Activated naive CD4-positive, alpha-beta T cell treated with anti-CD3 and anti-CD28 coated beads for 36 hours (primary cell): ENCODE measurements at regions of chr9 and their contacts with region 1.

Region 1: DNA sequence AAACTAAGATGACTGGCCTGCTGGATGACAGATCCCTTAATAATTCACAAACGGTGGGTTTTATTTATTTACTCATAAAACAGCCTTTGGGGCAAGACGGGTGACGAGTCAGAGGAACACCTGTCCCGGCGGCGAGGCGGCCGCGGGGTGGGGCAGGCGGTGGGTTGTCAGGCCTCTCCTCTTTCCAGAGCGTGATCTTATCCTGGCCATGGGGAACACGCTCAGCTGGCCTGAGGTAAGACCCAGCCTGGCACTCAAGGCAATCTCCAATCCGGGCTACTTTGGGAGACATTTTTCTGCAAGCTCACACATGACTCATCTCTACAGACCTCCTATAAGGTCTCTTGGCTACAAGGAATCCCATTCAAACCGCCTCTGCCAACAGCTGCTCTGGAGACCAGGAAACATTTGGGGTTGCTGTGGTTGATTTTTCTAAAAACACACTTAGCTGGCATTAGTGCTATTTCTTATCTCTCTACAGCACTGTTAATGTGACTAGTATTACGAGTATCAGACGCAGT is 6.3 kb downstream of the RAPGEF1 start:
- DNase-seq: peak; percentile 58
- H3K4me3 Mint-ChIP-seq: peak overlapping the region; percentile 69
- H3K27ac Mint-ChIP-seq: peak overlapping the region; percentile 93
- H3K4me1 Mint-ChIP-seq: peaks cover 90% of the 10 kb centered on the region
- H3K27me3 Mint-ChIP-seq: no peaks in the 10 kb centered on the region

Region 2: GRCh38 chr9:131270171-131271015 is 463.2 kb before region 1 on chr9:
- CTCF ChIA-PET with region 1: no interaction called
- intact Hi-C with region 1: loop called (anchors 5 kb)
- DNase-seq: peak; percentile 81
- H3K4me3 Mint-ChIP-seq: peak overlapping the region; percentile 96
- H3K27ac Mint-ChIP-seq: peak overlapping the region; percentile 99
- H3K4me1 Mint-ChIP-seq: peaks cover 56% of the 10 kb centered on the region
- H3K27me3 Mint-ChIP-seq: no peaks in the 10 kb centered on the region

Region 3: GRCh38 chr9:131393622-131394463 is 339.8 kb before region 1 on chr9 and contains the start of gene PRRC2B:
- CTCF ChIA-PET with region 1: no interaction called
- intact Hi-C with region 1: loop called (anchors 2 kb)
- DNase-seq: peak; percentile 87
- H3K4me3 Mint-ChIP-seq: peak within 1 kb of the TSS; percentile 89
- H3K27ac Mint-ChIP-seq: peak within 1 kb of the TSS; percentile 93
- H3K4me1 Mint-ChIP-seq: peaks cover 43% of the 10 kb centered on the region
- H3K27me3 Mint-ChIP-seq: no peaks in the 10 kb centered on the region
- total RNA-seq, gene PRRC2B: 157 to 171 TPM

Region 4: GRCh38 chr9:131627648-131628458 is 105.7 kb before region 1 on chr9:
- CTCF ChIA-PET with region 1: no interaction called
- intact Hi-C with region 1: no loop called
- DNase-seq: peak; percentile 41
- H3K4me3 Mint-ChIP-seq: no peak overlapping the region
- H3K27ac Mint-ChIP-seq: peak overlapping the region; percentile 59
- H3K4me1 Mint-ChIP-seq: peaks cover 18% of the 10 kb centered on the region
- H3K27me3 Mint-ChIP-seq: no peaks in the 10 kb centered on the region

Region 5: GRCh38 chr9:131645078-131645776 is 88.4 kb before region 1 on chr9:
- CTCF ChIA-PET with region 1: interaction called, 11 read pairs
- intact Hi-C with region 1: loop called (anchors 2 kb)
- DNase-seq: peak; percentile 47
- H3K4me3 Mint-ChIP-seq: no peak overlapping the region
- H3K27ac Mint-ChIP-seq: peak overlapping the region; percentile 68
- H3K4me1 Mint-ChIP-seq: peaks cover 52% of the 10 kb centered on the region
- H3K27me3 Mint-ChIP-seq: no peaks in the 10 kb centered on the region

Region 6: DNA sequence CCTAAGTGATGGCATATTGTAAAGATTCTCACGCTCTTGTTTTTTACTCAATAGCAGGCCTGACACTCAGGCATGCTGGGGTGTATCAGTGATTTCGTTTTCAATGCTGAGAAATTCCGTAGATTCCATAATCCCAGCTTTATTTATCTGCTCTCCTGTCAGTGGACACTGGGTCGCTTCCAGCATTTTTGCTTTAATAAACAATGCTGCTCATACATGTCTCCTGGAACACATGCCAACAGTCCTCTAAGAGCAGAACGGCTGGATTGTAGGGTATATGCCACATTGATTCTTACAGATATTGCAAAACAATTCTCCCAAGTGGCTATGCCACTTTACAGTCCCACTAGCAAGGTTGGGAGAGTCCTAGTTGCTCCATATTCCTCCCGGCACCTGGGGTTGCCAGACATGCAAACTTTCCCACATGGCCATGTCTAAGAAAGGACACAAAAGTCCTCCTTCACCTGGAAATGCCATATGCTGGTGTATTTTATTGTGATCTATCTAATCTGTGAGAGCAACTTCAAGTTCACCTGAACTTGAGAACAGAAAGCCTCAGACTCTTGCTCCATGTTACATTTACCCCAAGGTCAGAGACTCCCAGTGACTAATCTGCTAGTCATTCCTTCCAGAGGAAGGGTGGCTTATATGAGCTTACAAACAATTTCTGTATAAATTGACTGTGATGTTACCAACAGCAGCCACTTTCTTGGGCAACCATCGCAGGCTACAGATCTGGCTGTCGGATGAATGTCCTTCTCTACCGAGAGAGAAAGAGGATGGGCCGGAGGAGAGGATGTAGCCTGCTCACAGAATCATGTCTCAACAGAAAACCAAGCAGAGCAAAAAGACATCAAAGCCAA is 75.5 kb before region 1 on chr9:
- CTCF ChIA-PET with region 1: interaction called, 4 read pairs
- intact Hi-C with region 1: loop called (anchors 1 kb)
- DNase-seq: peak; percentile 66
- H3K4me3 Mint-ChIP-seq: peak overlapping the region; percentile 11
- H3K27ac Mint-ChIP-seq: peak overlapping the region; percentile 88
- H3K4me1 Mint-ChIP-seq: peaks cover 76% of the 10 kb centered on the region
- H3K27me3 Mint-ChIP-seq: no peaks in the 10 kb centered on the region

Region 7: DNA sequence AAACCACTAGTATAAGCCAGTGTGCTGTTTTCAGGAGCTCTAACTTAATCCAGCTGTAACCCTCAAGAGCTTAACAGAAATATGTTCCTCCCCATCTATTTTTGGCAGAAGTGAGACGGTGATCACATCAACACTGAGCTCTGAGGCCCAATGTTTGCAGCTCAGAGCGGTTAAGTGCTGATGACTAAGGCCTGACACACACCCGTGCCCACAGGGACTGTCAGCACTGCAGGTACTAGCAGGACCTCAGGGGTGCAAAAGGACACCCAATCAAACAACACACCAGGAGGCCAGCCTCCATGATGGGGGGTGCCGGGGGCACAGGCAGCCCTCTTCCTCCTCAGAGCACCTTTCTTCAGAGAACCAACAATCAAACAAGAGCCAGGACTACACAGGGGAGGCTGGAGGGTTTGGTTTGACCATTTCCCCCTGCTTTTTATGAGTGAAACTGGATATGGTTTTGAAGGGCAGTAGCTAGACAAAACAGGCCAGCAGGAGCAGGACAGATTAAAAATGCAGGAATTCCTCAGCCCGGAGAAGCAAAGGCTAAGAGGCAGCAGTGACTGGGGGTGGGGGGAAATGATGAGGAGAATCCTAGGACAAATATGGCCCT is 55.0 kb before region 1 on chr9:
- CTCF ChIA-PET with region 1: interaction called, 18 read pairs
- intact Hi-C with region 1: loop called (anchors 1 kb)
- DNase-seq: peak; percentile 92
- H3K4me3 Mint-ChIP-seq: peak overlapping the region; percentile 55
- H3K27ac Mint-ChIP-seq: peak overlapping the region; percentile 93
- H3K4me1 Mint-ChIP-seq: peaks cover 67% of the 10 kb centered on the region
- H3K27me3 Mint-ChIP-seq: no peaks in the 10 kb centered on the region

Region 8: GRCh38 chr9:131799177-131799823 is 65.7 kb after region 1 on chr9:
- CTCF ChIA-PET with region 1: no interaction called
- intact Hi-C with region 1: no loop called
- DNase-seq: peak; percentile 67
- H3K4me3 Mint-ChIP-seq: no peak overlapping the region
- H3K27ac Mint-ChIP-seq: no peak overlapping the region
- H3K4me1 Mint-ChIP-seq: no peaks in the 10 kb centered on the region
- H3K27me3 Mint-ChIP-seq: peaks cover 21% of the 10 kb centered on the region

Region 9: DNA sequence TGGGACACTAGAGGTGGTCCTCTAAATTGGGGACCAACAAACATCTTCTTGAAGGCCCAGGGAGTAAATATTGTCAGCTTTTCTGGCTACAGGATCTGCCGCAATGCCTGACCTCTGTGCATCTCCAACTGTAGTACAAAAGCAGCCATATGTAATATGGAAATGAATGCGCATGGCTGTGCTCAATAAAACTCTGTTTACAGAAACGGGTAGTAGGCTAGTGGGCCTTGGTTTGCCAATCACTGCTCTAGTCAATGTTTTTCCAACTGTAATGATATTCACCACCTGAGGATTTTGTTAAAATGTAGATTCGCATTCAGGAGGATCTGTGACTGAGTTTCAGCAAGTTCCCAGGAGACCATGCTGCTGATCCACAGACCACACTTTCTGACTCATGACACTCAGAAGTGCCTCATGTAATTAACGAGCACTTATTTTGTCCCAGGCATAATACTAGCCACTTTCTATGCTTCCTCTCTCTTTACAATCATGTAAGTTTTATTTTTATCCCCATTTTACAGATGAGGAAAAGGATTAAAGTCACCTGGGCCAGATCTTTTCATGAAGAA is 249.2 kb after region 1 on chr9:
- CTCF ChIA-PET with region 1: no interaction called
- intact Hi-C with region 1: no loop called
- DNase-seq: no peak
- H3K4me3 Mint-ChIP-seq: no peak overlapping the region
- H3K27ac Mint-ChIP-seq: no peak overlapping the region
- H3K4me1 Mint-ChIP-seq: peaks cover 8% of the 10 kb centered on the region
- H3K27me3 Mint-ChIP-seq: no peaks in the 10 kb centered on the region

Region 10: GRCh38 chr9:132293145-132293721 is 559.6 kb after region 1 on chr9:
- CTCF ChIA-PET with region 1: no interaction called
- intact Hi-C with region 1: no loop called
- DNase-seq: no peak
- H3K4me3 Mint-ChIP-seq: no peak overlapping the region
- H3K27ac Mint-ChIP-seq: peak overlapping the region; percentile 63
- H3K4me1 Mint-ChIP-seq: peaks cover 8% of the 10 kb centered on the region
- H3K27me3 Mint-ChIP-seq: no peaks in the 10 kb centered on the region

Region 11: GRCh38 chr9:132354637-132355355 is 621.2 kb after region 1 on chr9 and contains the start of gene SETX:
- CTCF ChIA-PET with region 1: no interaction called
- intact Hi-C with region 1: loop called (anchors 5 kb)
- DNase-seq: peak; percentile 96
- H3K4me3 Mint-ChIP-seq: peak within 1 kb of the TSS; percentile 88
- H3K27ac Mint-ChIP-seq: peak within 1 kb of the TSS; percentile 95
- H3K4me1 Mint-ChIP-seq: peaks cover 35% of the 10 kb centered on the region
- H3K27me3 Mint-ChIP-seq: no peaks in the 10 kb centered on the region
- total RNA-seq, gene SETX: 26.4 to 26.7 TPM